Adrenal gland (tissue), 19 donors: ENCODE measurements at regions of chr1 and their contacts with region 1.

Region 1: GRCh38 chr1:33735621-33736020 is 128.3 kb upstream of the HMGB4 start:
- DNase-seq: no peak
- H3K4me3 ChIP-seq: no peak overlapping the region
- H3K27ac ChIP-seq: no peak overlapping the region
- H3K4me1 ChIP-seq: no peaks in the 10 kb centered on the region
- H3K27me3 ChIP-seq: no peaks in the 10 kb centered on the region
- CTCF ChIP-seq: peak in 5 of 6 experiments; percentile 18 to 53 (median 42)
- POLR2A ChIP-seq: no peak

Region 2: DNA sequence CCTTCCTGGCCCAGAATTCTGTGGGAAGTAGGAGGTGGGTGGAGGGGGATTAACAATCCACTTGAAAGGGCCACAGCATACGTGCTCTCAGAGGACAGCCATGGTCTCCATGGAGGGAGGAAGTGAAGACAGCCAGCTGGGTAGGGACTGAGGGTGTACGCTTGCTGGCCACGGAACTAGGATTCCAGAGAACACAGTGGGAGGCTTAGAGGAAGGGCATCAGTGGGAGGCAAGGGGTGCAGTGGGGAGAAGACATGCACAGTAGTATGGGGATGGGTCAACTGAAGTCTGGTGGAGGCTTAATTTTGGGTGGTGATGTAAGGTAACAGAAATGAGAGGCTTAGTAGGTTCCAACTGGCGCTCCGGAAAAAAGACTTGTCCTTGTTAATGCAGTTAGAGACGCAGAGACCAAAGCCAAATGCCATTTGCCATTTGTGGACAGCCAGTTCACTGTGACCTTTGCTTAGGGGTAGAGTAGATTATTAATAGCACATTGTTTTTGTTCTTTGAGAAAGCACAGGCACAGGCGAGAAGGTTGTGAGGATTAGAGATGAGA is 160.2 kb before region 1 on chr1:
- intact Hi-C with region 1: no loop called
- DNase-seq: peak in 2 of 7 donors; percentile 10 to 52
- H3K4me3 ChIP-seq: no peak overlapping the region
- H3K27ac ChIP-seq: peak overlapping the region in 2 of 5 donors; percentile 37 to 62
- H3K4me1 ChIP-seq: peaks cover 0 to 5% of the 10 kb centered on the region in 2 donors
- H3K27me3 ChIP-seq: no peaks in the 10 kb centered on the region
- CTCF ChIP-seq: no peak
- POLR2A ChIP-seq: no peak

Region 3: GRCh38 chr1:33815058-33815457 is 79.4 kb after region 1 on chr1:
- intact Hi-C with region 1: no loop called
- DNase-seq: no peak
- H3K4me3 ChIP-seq: no peak overlapping the region
- H3K27ac ChIP-seq: no peak overlapping the region
- H3K4me1 ChIP-seq: no peaks in the 10 kb centered on the region
- H3K27me3 ChIP-seq: no peaks in the 10 kb centered on the region
- CTCF ChIP-seq: no peak
- POLR2A ChIP-seq: no peak

Region 4: GRCh38 chr1:34013958-34014737 is 278.5 kb after region 1 on chr1:
- intact Hi-C with region 1: loop called in 1 of 2 experiments (anchors 10 kb)
- DNase-seq: peak; percentile 26 to 56 (median 45)
- H3K4me3 ChIP-seq: no peak overlapping the region
- H3K27ac ChIP-seq: no peak overlapping the region
- H3K4me1 ChIP-seq: no peaks in the 10 kb centered on the region
- H3K27me3 ChIP-seq: no peaks in the 10 kb centered on the region
- CTCF ChIP-seq: peak; percentile 24 to 68 (median 57)
- POLR2A ChIP-seq: no peak

Region 5: DNA sequence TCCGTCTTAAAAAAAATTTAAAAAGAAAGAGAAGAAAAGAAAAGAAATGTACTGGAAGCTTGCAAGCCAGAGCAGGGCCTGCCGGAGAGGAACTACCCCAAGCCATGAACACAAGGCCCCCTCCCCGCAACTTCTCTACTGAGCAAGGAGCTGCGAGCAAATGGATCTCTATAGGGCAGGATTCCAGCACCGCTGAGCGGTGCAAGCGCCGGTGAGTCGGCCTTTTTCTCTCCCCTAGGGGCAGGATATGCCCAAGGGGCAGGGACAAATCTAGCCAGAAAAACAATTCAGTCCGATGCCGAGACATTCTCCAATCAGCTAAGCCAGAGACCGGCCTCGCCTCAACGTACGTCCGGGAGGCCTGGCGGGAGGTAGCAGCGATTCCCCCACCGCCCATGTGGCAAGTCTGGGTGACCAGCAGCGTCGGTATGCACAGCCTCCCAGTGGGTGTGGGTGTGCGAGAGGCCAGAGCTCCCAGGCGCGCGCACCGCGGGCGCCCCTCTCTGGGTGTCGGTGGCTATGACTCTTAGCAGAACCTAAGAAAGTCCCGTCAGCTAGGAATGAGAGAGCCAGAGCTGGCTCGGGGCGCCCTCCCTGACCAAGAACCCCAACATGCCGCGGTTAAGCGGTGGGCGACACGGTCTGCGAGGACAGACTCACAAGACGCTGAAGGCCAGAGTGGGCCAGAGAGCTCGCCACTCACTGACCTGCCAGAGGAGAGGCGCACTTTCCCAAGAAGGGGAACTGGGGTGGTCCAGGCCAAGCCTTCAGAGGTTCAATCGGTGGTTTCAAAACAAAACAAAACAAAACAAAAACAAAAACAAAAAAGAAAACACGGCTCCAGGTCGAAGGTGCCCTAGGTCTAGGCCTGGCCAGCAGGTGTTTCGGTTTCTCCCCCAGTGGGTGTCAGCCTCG is 427.5 kb after region 1 on chr1:
- intact Hi-C with region 1: loop called in 1 of 2 experiments (anchors 5 kb)
- DNase-seq: peak; percentile 79 to 90 (median 86)
- H3K4me3 ChIP-seq: peak overlapping the region in 3 of 4 donors; percentile 10 to 56 (median 29)
- H3K27ac ChIP-seq: no peak overlapping the region
- H3K4me1 ChIP-seq: peaks cover 14 to 18% of the 10 kb centered on the region in 2 donors
- H3K27me3 ChIP-seq: no peaks in the 10 kb centered on the region
- CTCF ChIP-seq: peak; percentile 57 to 77 (median 74)
- POLR2A ChIP-seq: peak in 1 of 2 donors; percentile 45

Region 6: GRCh38 chr1:34597877-34598514 is 862.4 kb after region 1 on chr1:
- intact Hi-C with region 1: loop called in 1 of 2 experiments (anchors 10 kb)
- DNase-seq: peak; percentile 73 to 87 (median 83)
- H3K4me3 ChIP-seq: no peak overlapping the region
- H3K27ac ChIP-seq: no peak overlapping the region
- H3K4me1 ChIP-seq: no peaks in the 10 kb centered on the region
- H3K27me3 ChIP-seq: no peaks in the 10 kb centered on the region
- CTCF ChIP-seq: peak; percentile 78 to 91 (median 84)
- POLR2A ChIP-seq: no peak